Heart left ventricle (tissue), 16 donors: ENCODE measurements at regions of chr3 and their contacts with region 1.

Region 1: DNA sequence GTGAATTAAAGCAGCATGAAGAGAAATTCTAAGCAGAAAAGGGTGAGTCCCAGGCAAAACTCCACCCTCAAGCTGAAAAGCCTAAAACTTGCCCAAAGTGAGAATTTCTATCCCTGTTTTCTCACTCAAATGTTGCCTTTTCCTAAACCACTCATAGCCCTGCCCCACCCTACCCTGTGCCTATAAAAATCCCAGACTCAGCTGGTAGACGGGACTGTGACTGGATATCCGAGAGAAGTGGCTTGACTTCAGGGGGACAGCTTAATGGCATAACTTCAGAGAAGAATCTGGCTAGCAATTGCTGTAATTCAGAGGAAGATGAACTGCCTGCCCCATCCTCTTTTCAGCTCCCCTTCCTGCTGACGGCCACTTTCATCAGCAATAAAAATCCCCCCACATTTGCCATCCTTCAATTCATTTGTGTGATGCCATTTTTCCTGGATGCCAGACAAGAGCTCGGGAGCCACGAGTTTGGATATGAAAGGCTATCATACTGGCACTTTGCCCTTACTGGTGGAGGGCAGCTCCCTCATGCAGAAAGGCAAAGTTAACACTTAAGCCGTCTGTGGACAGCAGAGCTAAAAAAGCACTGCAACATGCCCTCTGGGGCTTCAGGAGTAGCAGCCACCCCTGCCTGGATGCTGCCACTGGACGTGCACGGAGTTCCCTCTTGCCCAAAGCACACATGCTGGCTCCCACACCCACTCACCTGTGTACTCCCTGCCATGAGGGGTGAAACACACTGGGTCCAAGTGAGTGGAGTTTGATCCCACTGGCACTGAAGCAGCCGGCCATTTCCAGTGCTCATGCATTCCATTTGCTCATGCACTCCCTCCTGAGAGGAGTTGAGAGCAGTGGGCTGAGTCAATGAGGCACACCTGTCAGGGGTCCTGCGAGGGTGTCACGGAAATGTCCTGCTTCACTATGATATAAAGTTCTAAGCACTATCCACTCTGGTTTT is 670.6 kb downstream of the PLOD2 start:
- DNase-seq: peak; percentile 42 to 50 (median 49)
- ATAC-seq: peak; percentile 73 to 86 (median 84)
- H3K4me3 ChIP-seq: peak overlapping the region in 2 of 12 donors; percentile 6 to 12
- H3K27ac ChIP-seq: peak overlapping the region in 6 of 12 donors; percentile 7 to 69 (median 48)
- H3K4me1 ChIP-seq: peaks cover 0 to 10% (median 0%) of the 10 kb centered on the region in 12 donors
- H3K27me3 ChIP-seq: no peaks in the 10 kb centered on the region
- CTCF ChIP-seq: no peak
- POLR2A ChIP-seq: no peak

Region 2: DNA sequence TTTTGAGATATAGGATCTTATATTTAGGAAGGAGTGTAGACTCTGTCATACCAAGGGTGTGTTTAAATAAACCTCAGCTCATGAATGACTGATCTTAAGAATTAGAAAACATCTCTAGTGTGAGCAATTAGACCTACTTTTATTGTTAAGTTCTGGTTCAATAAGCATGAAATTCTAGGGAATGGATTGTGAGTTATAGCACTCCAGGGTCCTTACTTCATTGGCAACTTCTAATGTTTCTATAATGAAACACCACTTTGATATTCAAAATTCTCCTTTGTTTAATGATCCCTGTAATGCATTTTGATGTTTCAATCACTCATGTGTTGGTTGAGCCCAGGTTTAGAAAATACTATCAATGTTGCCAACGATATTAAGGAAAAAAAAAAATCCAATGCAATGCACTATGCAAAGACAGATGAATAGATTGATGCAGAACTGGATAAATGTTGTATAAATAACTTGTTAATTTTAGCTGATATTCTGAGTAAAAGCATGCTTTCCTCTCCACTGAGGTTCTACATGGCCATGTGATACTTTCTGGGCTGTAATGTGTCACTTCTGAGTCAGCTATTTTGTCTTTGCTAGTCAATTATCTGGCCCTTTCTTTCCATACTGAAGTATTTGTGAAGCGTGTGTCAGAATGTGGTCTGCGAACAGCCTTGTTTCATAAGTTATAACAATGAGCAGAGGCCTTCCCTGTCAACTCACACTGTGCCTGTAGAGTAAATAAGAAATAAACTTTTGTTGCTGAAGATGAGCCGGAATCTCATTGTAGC is 365.3 kb before region 1 on chr3:
- intact Hi-C with region 1: no loop called
- DNase-seq: no peak
- ATAC-seq: no peak
- H3K4me3 ChIP-seq: no peak overlapping the region
- H3K27ac ChIP-seq: no peak overlapping the region
- H3K4me1 ChIP-seq: no peaks in the 10 kb centered on the region
- H3K27me3 ChIP-seq: no peaks in the 10 kb centered on the region
- CTCF ChIP-seq: no peak
- POLR2A ChIP-seq: no peak

Region 3: GRCh38 chr3:145457825-145458552 is 32.4 kb before region 1 on chr3:
- intact Hi-C with region 1: loop called in 1 of 10 experiments (anchors 2 kb)
- DNase-seq: no peak
- ATAC-seq: no peak
- H3K4me3 ChIP-seq: no peak overlapping the region
- H3K27ac ChIP-seq: no peak overlapping the region
- H3K4me1 ChIP-seq: peaks cover 0 to 4% (median 0%) of the 10 kb centered on the region in 12 donors
- H3K27me3 ChIP-seq: no peaks in the 10 kb centered on the region
- CTCF ChIP-seq: no peak
- POLR2A ChIP-seq: no peak